Activated CD4-positive, alpha-beta memory T cell treated with anti-CD3 and anti-CD28 coated beads, Interleukin-2, amount 10 ng/mL, durations not matched to agents 7 days and 5 days (primary cell): ENCODE measurements at regions of chr16 and their contacts with region 1.

Region 1: DNA sequence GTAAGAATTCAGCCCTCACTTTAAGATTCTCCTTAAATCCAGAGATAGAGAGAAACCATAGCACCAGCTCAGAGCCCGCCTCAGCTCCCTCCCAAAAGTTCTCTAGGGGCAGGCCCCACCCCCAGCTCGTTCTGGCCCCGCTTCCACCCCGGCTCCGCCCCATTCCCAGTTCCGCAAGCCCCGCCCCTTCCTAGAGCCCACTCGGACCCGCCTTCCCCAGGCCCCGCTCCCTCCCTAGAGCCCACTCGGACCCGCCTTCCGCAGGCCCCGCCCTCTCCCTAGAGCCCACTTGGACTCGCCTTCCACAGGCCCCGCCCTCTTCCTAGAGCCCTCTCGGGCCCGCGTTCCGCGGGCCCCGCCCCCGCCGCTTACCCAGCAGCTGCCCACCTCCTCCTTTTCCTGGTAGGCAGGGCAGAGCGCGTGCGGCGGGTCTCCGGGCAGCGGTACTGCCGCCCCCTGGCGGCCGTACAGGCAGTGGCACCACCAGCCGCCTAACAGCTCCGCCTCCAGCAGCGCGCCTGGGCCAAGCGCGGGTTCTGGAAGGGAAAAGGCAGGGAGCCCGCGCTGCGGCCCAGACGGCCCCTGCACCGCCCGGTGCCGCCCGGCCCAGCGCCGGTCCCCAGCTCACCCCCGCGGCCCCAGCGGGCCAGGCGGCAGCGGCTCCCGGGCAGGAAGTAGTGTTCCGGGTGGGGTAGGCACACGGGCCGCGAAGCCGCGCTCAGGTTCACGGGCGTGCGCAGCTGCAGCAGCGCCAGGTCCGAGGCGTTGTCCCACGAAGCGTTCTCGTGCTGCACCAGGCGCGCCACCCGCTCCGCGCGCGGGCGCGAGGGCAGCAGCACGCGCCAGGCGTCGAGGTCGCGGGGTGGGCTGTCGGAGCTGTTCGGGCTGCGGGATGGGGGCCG is 6.8 kb upstream of the PRSS8 start:
- DNase-seq: peak; percentile 99
- H3K4me3 Mint-ChIP-seq: peak overlapping the region; percentile 61
- H3K27ac Mint-ChIP-seq: peak overlapping the region; percentile 50
- H3K4me1 Mint-ChIP-seq: peaks cover 20% of the 10 kb centered on the region
- H3K27me3 Mint-ChIP-seq: peaks cover 7% of the 10 kb centered on the region

Region 2: DNA sequence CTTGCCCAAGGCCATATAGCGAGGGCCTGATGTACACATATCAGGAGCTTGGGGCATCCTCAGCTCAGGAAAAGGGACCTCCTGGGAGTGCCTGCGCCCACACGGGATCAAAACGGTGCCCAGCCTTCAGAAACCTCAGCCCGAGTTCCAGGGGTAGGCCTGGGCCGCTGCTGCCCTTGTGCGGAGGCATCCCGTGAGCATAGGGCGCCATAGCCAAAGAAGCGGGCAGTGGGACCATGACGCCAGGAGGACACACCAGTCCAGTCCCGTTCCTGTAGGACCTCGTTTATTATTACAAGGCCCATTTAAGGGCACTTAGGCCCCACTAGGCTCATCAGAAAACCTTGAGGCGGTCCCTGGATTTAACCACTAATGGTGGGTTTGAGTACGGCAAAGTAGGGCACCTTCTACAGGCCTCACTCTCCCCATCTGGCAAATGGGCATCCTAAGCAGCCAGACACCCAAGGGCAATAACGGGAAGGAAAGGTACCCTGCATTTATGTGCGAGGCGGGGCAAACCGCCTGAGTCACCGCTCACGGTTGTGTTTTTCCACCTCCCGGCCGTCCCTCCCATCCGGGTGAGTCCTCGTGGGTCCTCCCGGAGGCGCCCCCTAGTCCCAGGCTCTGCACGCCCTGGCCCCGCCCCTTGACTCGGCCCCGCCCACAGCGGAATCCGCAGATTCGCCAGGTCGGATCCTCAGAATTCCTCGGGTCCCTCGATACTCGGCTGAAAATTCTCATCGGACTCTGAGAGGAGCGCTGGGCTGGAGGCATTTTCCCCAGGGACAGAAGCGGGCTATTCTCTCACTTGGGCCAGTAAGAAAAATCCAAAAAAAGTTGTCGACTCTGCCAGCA is 185.5 kb before region 1 on chr16:
- CTCF ChIA-PET with region 1: interaction called, 21 read pairs
- POLR2A ChIA-PET with region 1: interaction called, 7 read pairs
- DNase-seq: peak; percentile 87
- H3K4me3 Mint-ChIP-seq: peak overlapping the region; percentile 90
- H3K27ac Mint-ChIP-seq: peak overlapping the region; percentile 99
- H3K4me1 Mint-ChIP-seq: peaks cover 45% of the 10 kb centered on the region
- H3K27me3 Mint-ChIP-seq: no peaks in the 10 kb centered on the region

Region 3: DNA sequence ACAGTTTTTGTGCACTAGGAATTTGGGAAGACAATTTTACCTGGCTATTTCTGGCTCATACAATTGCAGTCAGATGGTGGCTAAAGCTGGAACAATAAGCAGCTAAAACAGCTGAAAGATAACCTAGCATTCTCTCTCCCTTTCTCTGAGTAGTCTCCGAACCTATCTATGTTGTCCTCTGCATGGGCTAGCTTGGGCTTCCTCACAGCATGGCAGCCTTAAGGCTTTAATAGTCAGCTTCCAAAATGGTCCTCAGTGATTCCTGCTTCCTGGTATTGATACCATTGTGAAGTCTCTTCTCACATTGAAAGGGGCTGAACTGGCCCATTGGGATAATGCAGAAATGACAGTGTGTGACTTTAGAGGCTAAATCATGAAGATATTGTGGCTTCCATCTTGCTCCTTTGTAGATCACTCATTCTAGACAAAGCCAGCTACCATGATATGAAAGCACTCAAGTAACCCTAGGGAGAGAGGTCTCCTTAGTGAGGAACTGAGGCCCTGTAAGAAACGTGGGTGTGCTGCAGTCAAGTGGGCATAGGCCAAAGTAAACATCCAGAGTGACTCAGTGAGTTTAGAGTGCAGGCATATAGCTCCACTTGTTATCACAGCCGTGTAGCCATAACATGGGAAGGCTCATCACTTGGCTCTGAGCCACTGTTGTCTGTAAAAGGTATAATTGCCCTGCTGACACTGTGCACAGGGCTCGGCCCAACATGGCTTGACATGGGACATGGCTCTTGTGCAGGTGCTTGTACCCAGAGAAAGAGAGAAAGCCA is 42.3 kb before region 1 on chr16:
- CTCF ChIA-PET with region 1: interaction called, 12 read pairs
- POLR2A ChIA-PET with region 1: no interaction called
- DNase-seq: no peak
- H3K4me3 Mint-ChIP-seq: no peak overlapping the region
- H3K27ac Mint-ChIP-seq: no peak overlapping the region
- H3K4me1 Mint-ChIP-seq: peaks cover 9% of the 10 kb centered on the region
- H3K27me3 Mint-ChIP-seq: no peaks in the 10 kb centered on the region

Region 4: GRCh38 chr16:31128711-31129567 is 13.4 kb before region 1 on chr16:
- CTCF ChIA-PET with region 1: interaction called, 71 read pairs
- POLR2A ChIA-PET with region 1: interaction called, 7 read pairs
- DNase-seq: no peak
- H3K4me3 Mint-ChIP-seq: no peak overlapping the region
- H3K27ac Mint-ChIP-seq: peak overlapping the region; percentile 58
- H3K4me1 Mint-ChIP-seq: peaks cover 1% of the 10 kb centered on the region
- H3K27me3 Mint-ChIP-seq: no peaks in the 10 kb centered on the region

Region 5: DNA sequence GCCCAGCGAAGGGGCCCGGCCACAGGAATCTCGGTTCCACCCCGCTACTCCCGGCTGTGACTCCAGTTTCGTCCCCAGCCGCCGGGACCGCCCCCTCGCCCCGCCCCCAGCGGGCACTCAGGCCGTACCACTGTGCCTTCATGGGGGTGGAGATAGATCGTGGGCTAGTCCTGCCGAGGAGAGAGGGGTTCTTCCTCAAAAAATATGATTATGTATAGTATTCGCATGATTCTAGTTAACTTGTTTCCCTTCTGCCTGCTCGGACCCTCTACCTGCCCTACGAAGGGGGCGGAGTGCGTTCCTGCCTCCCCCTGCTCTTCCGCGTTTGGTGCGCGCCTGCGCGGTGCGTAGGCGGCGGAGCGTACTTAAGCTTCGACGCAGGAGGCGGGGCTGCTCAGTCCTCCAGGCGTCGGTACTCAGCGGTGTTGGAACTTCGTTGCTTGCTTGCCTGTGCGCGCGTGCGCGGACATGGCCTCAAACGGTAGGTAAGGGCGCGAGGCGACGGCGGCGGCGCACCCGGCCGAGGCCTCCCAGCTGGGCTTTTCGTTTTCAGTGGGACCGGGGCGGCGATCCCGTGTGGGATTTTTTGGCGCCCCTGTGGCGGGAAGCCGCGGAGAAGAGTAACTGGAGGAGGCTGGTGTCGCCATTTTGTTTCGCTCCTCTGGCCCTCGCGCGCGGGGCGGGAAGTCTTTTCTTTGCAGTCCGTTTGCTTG is 37.5 kb after region 1 on chr16 and contains the start of gene FUS:
- CTCF ChIA-PET with region 1: interaction called, 17 read pairs
- POLR2A ChIA-PET with region 1: interaction called, 96 read pairs
- DNase-seq: peak; percentile 91
- H3K4me3 Mint-ChIP-seq: peak within 1 kb of the TSS; percentile 93
- H3K27ac Mint-ChIP-seq: peak within 1 kb of the TSS; percentile 98
- H3K4me1 Mint-ChIP-seq: peaks cover 53% of the 10 kb centered on the region
- H3K27me3 Mint-ChIP-seq: peaks cover 2% of the 10 kb centered on the region
- total RNA-seq, gene FUS: 386 to 397 TPM